ENCODE measurements at regions of chr16 and their contacts with region 1.

Region 1: GRCh38 chr16:11255737-11256660 is at the start of gene SOCS1:
- DNase-seq: peak; percentile 91 to 94 (median 94)
- ATAC-seq: peak; percentile 80
- H3K4me3 ChIP-seq: peak within 1 kb of the TSS; percentile 82
- H3K27ac ChIP-seq: peak within 1 kb of the TSS; percentile 86
- H3K4me1 ChIP-seq: peaks cover 40 to 47% of the 10 kb centered on the region in 2 experiments; a peak in 4 of 5 replicates
- H3K27me3 ChIP-seq: 0 out of 5 replicates have a peak, but pooled peaks cover 0 to 8% of the 10 kb centered on the region in 2 experiments
- CTCF ChIP-seq: peak; percentile 73 to 87 (median 84)
- EP300 ChIP-seq: no peak
- POLR2A ChIP-seq: peak; percentile 73
- RAD21 ChIP-seq: peak; percentile 91 to 94
- polyA plus RNA-seq, gene SOCS1: 0.04 to 0.10 TPM

Region 2: DNA sequence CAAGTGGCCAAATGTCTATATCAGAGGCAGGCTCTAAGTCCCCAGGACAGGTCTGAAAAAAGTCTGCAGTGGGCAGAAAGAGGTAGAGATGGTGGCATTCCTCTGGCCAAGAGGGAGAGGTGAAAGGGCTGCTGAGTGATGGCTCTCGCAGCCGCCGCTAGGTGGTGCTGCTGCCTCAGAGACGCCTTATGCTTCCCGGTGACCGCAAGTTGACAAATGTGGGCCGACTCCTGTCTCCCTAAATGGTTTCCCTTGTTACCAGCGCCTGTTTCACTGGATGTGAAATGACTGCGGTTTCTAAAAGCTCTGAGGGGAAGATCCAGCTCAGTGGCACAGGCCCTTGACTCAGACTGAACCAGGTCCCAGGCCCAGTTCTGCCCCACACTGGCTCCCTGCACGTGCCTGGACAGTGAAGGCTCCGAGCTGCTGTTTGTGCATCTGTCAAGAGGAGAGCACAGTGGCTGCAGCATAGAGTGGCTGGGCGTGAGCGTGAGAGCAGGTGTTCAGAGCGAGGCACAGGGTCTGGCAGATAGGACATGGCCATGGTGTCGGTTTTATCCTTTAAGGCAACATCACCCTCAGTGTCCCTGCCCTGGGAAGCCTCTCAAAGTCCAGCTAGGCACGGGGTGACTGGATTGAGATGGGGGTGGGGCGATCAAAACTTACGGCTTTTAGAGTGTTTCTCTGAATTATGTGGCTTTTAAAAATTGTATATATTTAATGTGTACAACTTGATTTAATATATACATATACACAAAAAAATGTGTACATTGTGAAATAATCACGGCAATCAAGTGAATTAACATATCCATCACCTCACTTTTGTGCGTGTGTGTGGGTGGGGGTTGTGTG is 291.7 kb before region 1 on chr16:
- CTCF ChIA-PET with region 1: interaction called, 58 read pairs
- POLR2A ChIA-PET with region 1: interaction called, 17 read pairs
- in situ Hi-C with region 1: loop called (anchors 5 kb)
- intact Hi-C with region 1: no loop called
- DNase-seq: peak; percentile 78 to 88 (median 78)
- ATAC-seq: peak; percentile 96
- H3K4me3 ChIP-seq: no peak overlapping the region
- H3K27ac ChIP-seq: no peak overlapping the region
- H3K4me1 ChIP-seq: peaks cover 16 to 18% of the 10 kb centered on the region in 2 experiments; a peak in 4 of 5 replicates
- H3K27me3 ChIP-seq: no peaks in the 10 kb centered on the region
- CTCF ChIP-seq: peak; percentile 91 to 97 (median 96)
- EP300 ChIP-seq: no peak
- POLR2A ChIP-seq: no peak
- RAD21 ChIP-seq: peak; percentile 87 to 92

Region 3: GRCh38 chr16:10982465-10983150 is 273.4 kb before region 1 on chr16:
- CTCF ChIA-PET with region 1: no interaction called
- POLR2A ChIA-PET with region 1: interaction called, 11 read pairs
- in situ Hi-C with region 1: no loop called
- intact Hi-C with region 1: no loop called
- DNase-seq: no peak
- ATAC-seq: no peak
- H3K4me3 ChIP-seq: no peak overlapping the region
- H3K27ac ChIP-seq: no peak overlapping the region
- H3K4me1 ChIP-seq: peaks cover 3 to 7% of the 10 kb centered on the region in 2 experiments; a peak in 3 of 5 replicates
- H3K27me3 ChIP-seq: no peaks in the 10 kb centered on the region
- CTCF ChIP-seq: no peak
- EP300 ChIP-seq: no peak
- POLR2A ChIP-seq: no peak
- RAD21 ChIP-seq: no peak

Region 4: GRCh38 chr16:11133344-11133943 is 122.6 kb before region 1 on chr16:
- CTCF ChIA-PET with region 1: no interaction called
- POLR2A ChIA-PET with region 1: interaction called, 9 read pairs
- in situ Hi-C with region 1: no loop called
- intact Hi-C with region 1: loop called (anchors 10 kb)
- DNase-seq: peak; percentile 69 to 90 (median 75)
- ATAC-seq: peak; percentile 50
- H3K4me3 ChIP-seq: no peak overlapping the region
- H3K27ac ChIP-seq: peak overlapping the region; percentile 22; the same call in 1 of the 3 replicates
- H3K4me1 ChIP-seq: peaks cover 42 to 54% of the 10 kb centered on the region in 2 experiments
- H3K27me3 ChIP-seq: no peaks in the 10 kb centered on the region
- CTCF ChIP-seq: no peak
- EP300 ChIP-seq: peak; percentile 39; the same call in 1 of the 2 replicates
- POLR2A ChIP-seq: no peak
- RAD21 ChIP-seq: peak in 1 of 2 experiments; percentile 15; a peak in 1 of 4 replicates

Region 5: DNA sequence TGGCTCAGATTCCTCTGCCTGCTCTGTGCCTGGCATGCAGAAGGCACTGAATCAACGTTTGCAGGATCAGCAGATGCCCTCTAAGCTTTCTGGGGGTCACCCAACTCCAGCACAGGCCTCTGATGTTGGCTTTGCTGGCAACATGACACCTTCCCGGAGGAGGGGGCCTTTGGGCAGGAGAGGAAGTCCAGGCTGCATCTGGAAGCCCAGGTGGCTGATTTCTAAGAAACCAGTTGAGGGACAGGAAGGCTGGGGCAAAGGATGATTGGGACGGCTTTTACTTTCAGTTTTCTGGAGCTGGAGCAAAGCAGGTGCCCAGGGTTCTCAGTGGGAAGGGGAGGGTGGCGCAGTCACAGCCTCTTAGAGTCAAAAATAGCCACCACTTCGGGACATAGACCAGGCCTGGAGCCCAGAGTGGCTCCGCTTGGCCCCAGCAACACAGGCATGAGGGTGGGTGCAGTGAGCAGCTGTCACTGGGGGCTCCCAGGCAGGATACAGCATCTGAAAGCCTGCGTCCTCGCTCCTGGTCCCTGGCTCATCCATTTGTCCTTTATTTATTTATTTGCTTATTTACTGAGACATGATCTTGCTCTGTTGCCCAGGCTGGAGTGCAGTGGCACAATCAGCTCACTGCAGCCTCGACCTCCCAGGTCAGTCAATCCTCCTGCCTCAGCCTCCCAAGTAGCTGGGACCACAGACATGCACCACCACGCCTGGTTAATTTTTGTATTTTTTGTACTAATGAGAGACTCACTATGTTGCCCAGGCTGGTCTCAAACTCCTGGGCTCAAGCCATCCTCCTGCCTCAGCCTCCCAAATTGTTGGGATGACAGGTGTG is 15.1 kb before region 1 on chr16:
- CTCF ChIA-PET with region 1: no interaction called
- POLR2A ChIA-PET with region 1: interaction called, 17 read pairs
- in situ Hi-C with region 1: no loop called
- intact Hi-C with region 1: no loop called
- DNase-seq: peak in 1 of 4 experiments; percentile 59
- ATAC-seq: no peak
- H3K4me3 ChIP-seq: no peak overlapping the region
- H3K27ac ChIP-seq: 0 out of 3 replicates have a peak overlapping the region, but pooled peaks have one; percentile 2
- H3K4me1 ChIP-seq: peaks cover 33 to 34% of the 10 kb centered on the region in 2 experiments
- H3K27me3 ChIP-seq: no peaks in the 10 kb centered on the region
- CTCF ChIP-seq: no peak
- EP300 ChIP-seq: no peak
- POLR2A ChIP-seq: no peak
- RAD21 ChIP-seq: no peak

Region 6: GRCh38 chr16:11356573-11357331 is 100.8 kb after region 1 on chr16:
- CTCF ChIA-PET with region 1: interaction called, 6 read pairs
- POLR2A ChIA-PET with region 1: interaction called, 5 read pairs
- in situ Hi-C with region 1: loop called (anchors 5 kb)
- intact Hi-C with region 1: loop called (anchors 2 kb)
- DNase-seq: peak; percentile 75 to 82 (median 78)
- ATAC-seq: peak; percentile 90
- H3K4me3 ChIP-seq: no peak overlapping the region
- H3K27ac ChIP-seq: no peak overlapping the region; the same call in 2 of the 3 replicates
- H3K4me1 ChIP-seq: peaks cover 8 to 39% of the 10 kb centered on the region in 2 experiments; a peak in 4 of 5 replicates
- H3K27me3 ChIP-seq: no peaks in the 10 kb centered on the region
- CTCF ChIP-seq: peak; percentile 77 to 88 (median 84)
- EP300 ChIP-seq: no peak
- POLR2A ChIP-seq: no peak
- RAD21 ChIP-seq: peak; percentile 77 to 84

Region 7: GRCh38 chr16:11632464-11632939 is 376.5 kb after region 1 on chr16:
- CTCF ChIA-PET with region 1: no interaction called
- POLR2A ChIA-PET with region 1: no interaction called
- in situ Hi-C with region 1: no loop called
- intact Hi-C with region 1: no loop called
- DNase-seq: no peak
- ATAC-seq: no peak
- H3K4me3 ChIP-seq: no peak overlapping the region
- H3K27ac ChIP-seq: no peak overlapping the region
- H3K4me1 ChIP-seq: peaks cover 7 to 8% of the 10 kb centered on the region in 2 experiments; a peak in 4 of 5 replicates
- H3K27me3 ChIP-seq: peaks cover 3 to 37% of the 10 kb centered on the region in 2 experiments; a peak in 4 of 5 replicates
- CTCF ChIP-seq: no peak
- EP300 ChIP-seq: no peak
- POLR2A ChIP-seq: no peak
- RAD21 ChIP-seq: no peak

Region 8: DNA sequence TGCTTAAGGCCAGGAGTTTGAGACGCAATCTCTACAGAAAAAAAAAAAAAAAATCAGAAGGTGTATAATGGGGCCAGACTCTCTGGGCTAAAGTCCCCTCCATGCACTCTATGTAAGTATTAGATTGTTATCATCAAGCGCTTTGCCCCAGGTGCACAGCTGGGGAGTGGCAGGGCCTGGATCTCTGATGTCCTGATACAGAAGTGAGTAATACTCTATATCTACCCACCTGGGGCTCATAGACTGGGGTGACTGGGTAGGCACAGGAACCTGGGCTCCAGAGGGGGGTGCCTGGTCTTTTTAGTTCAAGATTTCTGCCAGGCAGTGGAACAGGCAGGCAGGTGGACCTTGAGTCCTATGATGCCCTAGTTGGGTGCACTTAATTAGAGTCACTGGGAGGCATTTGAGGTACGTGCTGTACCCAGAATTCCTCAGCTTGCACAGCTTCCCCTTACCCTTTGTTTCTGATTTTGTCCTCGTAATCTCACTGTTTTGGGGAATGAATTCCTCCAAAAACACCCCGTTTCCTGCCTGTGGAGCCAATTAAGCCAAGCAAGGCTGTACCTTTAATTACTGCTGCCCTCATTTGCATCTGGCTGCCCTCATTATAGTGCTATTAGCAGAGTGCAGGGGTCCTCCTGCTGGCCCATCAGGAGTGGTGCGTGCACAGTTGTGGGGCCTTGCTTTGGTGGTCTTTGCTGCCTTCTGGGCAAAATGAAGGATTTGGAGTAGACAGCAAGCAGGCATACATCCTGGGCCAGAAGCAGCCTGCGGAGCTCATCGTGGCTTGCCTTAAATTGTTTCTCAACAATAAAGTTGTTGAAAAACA is 959.5 kb after region 1 on chr16:
- CTCF ChIA-PET with region 1: no interaction called
- POLR2A ChIA-PET with region 1: no interaction called
- in situ Hi-C with region 1: no loop called
- intact Hi-C with region 1: no loop called
- DNase-seq: no peak
- ATAC-seq: peak; percentile 49; the same call in 1 of the 3 replicates
- H3K4me3 ChIP-seq: no peak overlapping the region
- H3K27ac ChIP-seq: no peak overlapping the region
- H3K4me1 ChIP-seq: no peaks in the 10 kb centered on the region; a peak in 1 of 5 replicates
- H3K27me3 ChIP-seq: no peaks in the 10 kb centered on the region; a peak in 1 of 5 replicates
- CTCF ChIP-seq: peak; percentile 18 to 29 (median 22); a peak in 1 of 6 replicates
- EP300 ChIP-seq: no peak
- POLR2A ChIP-seq: no peak
- RAD21 ChIP-seq: no peak